ENCODE measurements at regions of chr1 and their contacts with region 1.

Region 1: DNA sequence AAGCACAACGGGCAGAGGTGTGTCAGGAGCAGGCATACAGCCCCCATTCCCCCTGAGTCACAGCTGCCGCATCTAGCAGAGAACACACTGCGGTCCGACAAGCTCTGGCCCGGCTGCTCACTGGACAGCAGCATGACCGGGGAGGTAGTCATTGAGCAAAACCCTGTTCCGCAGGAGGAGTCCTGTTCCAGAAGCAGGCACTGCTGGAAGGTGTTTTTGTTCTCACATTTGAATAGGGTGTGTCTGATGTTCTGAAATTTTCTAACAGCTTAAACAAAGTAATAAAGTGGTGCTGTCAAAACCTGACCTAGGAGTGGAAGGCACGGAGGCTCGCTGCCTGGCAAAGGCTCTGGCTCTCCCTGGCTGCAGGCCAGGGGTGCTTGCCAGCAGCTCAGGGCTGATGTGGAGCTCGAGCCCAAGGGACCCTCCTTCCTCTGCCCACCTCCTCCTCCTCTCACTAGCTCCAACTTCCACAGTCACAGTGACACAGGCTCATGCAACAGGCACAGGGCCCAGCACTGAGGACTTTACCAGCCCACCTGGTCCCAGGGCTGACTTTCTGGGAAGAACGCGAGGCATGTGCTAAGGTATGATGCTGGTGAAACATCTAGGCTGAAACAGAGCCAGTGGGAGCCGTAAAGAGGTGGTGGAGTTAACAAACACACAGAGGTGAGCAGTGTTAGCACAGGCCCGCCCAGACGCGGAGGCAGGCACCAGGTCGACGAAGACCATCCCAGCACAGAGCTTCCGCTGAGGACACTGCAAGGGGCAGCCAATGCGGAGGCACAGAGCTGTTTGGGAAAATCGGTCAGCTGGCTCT is 118.6 kb upstream of the IFFO2 start:
- DNase-seq: no peak
- ATAC-seq: no peak
- H3K4me3 ChIP-seq: no peak overlapping the region
- H3K27ac ChIP-seq: no peak overlapping the region
- H3K4me1 ChIP-seq: no peaks in the 10 kb centered on the region
- H3K27me3 ChIP-seq: no peaks in the 10 kb centered on the region
- CTCF ChIP-seq: no peak
- POLR2A ChIP-seq: no peak
- RAD21 ChIP-seq: no peak

Region 2: GRCh38 chr1:18949686-18950400 is 125.3 kb before region 1 on chr1:
- CTCF ChIA-PET with region 1: no interaction called
- POLR2A ChIA-PET with region 1: no interaction called
- dilution Hi-C with region 1: no loop called
- in situ Hi-C with region 1: no loop called
- intact Hi-C with region 1: loop called (anchors 5 kb)
- DNase-seq: peak; percentile 55
- ATAC-seq: peak; percentile 55
- H3K4me3 ChIP-seq: peak overlapping the region; percentile 1; the same call in 1 of the 2 replicates
- H3K27ac ChIP-seq: peak overlapping the region; percentile 93
- H3K4me1 ChIP-seq: peaks cover 58% of the 10 kb centered on the region
- H3K27me3 ChIP-seq: no peaks in the 10 kb centered on the region
- CTCF ChIP-seq: peak; percentile 24; the same call in 1 of the 2 replicates
- POLR2A ChIP-seq: no peak; the same call in 1 of the 2 replicates
- RAD21 ChIP-seq: no peak